ENCODE measurements at regions of chr11 and their contacts with region 1.

Region 1: DNA sequence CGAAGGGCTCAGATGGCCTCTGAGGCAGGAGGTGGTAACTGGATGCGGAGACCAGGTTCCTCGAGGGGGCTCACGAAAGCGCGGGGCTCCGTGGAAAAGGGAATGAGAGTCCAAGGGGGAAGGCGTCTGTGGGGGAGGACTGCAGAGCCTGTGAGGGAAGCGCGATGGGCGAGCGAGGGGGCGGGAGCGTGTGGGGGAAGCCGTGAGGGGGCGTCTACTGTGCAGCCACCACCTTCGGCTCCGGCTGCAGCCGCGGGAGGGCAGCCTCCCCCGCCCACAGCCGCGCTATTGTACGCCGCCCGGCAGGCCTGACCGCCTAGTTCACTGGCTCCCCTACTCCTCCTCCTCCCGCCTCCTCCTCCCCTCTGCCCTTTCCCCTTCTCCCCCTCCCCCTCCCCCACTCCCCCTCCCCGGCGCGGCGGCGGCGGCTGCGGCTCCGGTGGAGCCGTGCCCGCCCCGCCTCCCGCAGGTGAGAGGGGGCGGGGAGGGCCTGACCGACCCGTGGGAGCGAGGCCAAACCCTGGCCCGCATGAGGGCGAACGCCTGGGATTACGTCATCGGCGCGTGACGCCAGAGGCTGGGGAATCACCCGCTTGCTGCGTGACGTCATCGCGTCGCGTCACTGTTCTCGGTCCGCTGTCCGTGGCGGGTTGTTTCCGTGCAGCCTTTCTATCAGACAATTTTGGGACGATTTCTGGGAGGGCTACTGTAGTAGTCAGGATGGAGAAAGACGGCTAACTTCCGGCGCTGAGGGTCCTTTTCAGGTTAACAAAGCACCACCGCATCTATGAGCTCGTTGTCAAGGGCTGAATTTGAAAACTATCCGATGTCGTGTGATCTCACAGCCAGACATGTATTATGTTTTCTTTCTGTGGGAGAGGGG is at the start of gene PAK1:
- DNase-seq: peak; percentile 83 to 93
- ATAC-seq: peak; percentile 86 to 91 (median 88)
- H3K4me3 ChIP-seq: peak within 1 kb of the TSS; percentile 73
- H3K27ac ChIP-seq: peak within 1 kb of the TSS; percentile 65
- H3K4me1 ChIP-seq: peaks cover under 1% of the 10 kb centered on the region
- H3K27me3 ChIP-seq: no peaks in the 10 kb centered on the region
- CTCF ChIP-seq: no peak
- total RNA-seq, gene PAK1: 39.5 to 78.7 (median 52.9) TPM

Region 2: DNA sequence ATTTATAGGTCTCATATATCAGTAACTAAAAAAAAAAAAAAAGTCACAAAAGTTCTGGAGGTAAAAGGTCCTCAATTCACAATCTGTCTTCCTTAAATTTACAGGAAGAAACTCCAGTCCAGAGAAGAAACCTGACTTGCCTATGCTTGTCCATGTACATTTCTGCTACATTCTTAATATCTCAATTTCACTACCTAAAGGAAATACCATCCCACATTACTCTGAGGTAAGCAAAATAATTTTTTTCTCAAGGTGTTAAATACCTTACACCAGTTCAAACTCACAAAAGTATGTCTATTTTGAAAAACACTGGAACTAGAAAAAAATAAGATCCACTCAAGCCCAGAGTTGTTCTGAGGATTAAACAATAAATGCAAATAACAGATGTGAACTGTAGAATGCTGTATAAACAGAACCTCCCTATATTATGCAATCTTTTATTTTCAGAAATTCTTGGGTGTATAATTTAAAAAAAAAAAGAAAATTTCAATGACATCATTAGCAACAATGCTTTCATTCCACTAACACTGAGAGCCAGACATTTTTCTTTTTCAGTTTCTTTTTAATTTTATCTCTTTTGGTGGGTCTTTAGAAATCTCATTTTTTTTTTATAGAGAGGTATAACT is 122.6 kb before region 1 on chr11:
- intact Hi-C with region 1: loop called in 1 of 2 experiments (anchors 10 kb)
- DNase-seq: no peak
- ATAC-seq: no peak
- H3K4me3 ChIP-seq: no peak overlapping the region
- H3K27ac ChIP-seq: peak overlapping the region; percentile 69
- H3K4me1 ChIP-seq: peaks cover 57% of the 10 kb centered on the region
- H3K27me3 ChIP-seq: no peaks in the 10 kb centered on the region
- CTCF ChIP-seq: no peak

Region 3: DNA sequence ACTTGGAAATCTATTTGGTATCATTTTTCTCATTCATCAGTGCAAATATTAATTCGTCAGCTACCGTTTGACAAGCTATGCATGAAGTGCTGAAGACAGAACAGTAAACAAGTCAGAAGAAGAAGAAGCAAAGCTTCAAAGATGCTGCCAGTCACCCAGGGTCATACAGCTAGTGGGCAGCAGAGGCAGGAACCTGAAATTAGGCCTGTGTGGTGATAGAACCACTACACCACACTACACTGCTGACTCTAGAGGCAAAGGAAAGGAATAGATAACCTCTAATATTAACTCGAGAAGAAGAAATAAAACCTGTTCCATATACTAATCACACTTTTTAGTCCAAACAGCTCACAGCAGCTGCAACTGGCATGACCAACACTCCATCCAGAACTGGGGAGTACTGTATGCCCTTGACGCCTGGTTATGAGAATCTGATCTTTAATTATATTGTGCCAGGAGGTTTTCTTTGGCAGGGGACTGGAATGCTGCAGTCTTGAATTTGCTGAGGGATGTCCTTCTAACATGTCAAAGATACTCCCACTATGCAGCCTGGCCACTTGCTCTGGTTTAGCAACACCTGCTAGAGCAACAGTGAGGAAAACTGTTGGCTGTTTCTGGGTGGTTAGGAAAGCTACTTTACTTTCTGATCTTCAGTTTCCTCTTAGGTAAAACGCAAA is 73.1 kb before region 1 on chr11:
- intact Hi-C with region 1: loop called (anchors 5 kb)
- DNase-seq: peak in 1 of 2 donors; percentile 67
- ATAC-seq: peak; percentile 95 to 97 (median 96)
- H3K4me3 ChIP-seq: peak overlapping the region; percentile 24
- H3K27ac ChIP-seq: peak overlapping the region; percentile 76
- H3K4me1 ChIP-seq: peaks cover 64% of the 10 kb centered on the region
- H3K27me3 ChIP-seq: no peaks in the 10 kb centered on the region
- CTCF ChIP-seq: peak; percentile 30

Region 4: DNA sequence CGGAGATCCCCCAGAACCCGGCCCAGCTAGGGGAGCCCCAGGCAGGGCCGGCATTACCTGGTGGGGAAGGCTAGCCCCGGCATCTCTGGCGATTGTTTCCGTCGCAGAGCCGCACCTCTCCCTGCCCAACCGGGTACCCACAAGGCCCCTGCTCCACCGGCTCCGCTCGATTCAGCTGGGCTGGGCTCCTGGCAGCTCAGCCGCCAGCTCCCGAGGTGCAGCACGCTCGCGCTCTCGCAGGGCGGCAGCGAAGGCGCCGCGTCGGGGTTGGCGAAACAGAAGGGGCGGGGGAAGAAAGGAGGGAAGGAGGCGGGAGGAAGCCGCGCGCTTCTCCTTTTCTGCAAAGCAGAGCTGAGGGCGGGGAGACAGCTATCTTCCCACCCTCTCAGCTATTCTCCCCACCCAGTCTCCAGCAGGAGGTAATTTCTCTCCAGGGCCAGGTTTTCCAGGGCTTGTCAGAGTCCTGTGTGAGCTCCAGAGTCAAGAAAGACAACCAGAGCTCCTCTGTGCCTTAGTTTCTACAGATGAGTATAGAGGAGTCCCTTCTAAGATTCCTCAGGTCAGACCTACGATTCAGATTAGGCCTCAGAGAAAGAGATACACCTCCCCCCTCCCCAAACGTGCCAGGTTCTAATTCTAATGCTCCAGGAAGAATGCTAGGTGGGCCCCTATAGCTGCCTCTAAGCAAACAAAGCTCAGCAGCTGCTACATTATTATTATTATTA is 62.2 kb before region 1 on chr11:
- intact Hi-C with region 1: loop called in 1 of 2 experiments (anchors 5 kb)
- DNase-seq: peak; percentile 82 to 91
- ATAC-seq: peak; percentile 85 to 93 (median 90)
- H3K4me3 ChIP-seq: peak overlapping the region; percentile 81
- H3K27ac ChIP-seq: peak overlapping the region; percentile 85
- H3K4me1 ChIP-seq: peaks cover 14% of the 10 kb centered on the region
- H3K27me3 ChIP-seq: no peaks in the 10 kb centered on the region
- CTCF ChIP-seq: no peak

Region 5: GRCh38 chr11:77547863-77548551 is 74.0 kb after region 1 on chr11:
- intact Hi-C with region 1: loop called in 1 of 2 experiments (anchors 5 kb)
- DNase-seq: no peak
- ATAC-seq: peak; percentile 44 to 84 (median 64)
- H3K4me3 ChIP-seq: no peak overlapping the region
- H3K27ac ChIP-seq: no peak overlapping the region
- H3K4me1 ChIP-seq: no peaks in the 10 kb centered on the region
- H3K27me3 ChIP-seq: no peaks in the 10 kb centered on the region
- CTCF ChIP-seq: peak; percentile 71